MCF 10A (cell line): ENCODE measurements at regions of chr1 and their contacts with region 1.

Region 1: GRCh38 chr1:154849645-154850131 is 20.4 kb downstream of the KCNN3 start:
- DNase-seq: no peak
- H3K4me3 Mint-ChIP-seq: no peak overlapping the region
- H3K27ac Mint-ChIP-seq: no peak overlapping the region
- H3K4me1 Mint-ChIP-seq: no peaks in the 10 kb centered on the region
- H3K27me3 Mint-ChIP-seq: peaks cover 39% of the 10 kb centered on the region
- CTCF ChIP-seq: no peak

Region 2: GRCh38 chr1:154863315-154864174 is 13.9 kb after region 1 on chr1:
- CTCF ChIA-PET with region 1: interaction called, 12 read pairs
- POLR2A ChIA-PET with region 1: interaction called, 4 read pairs
- intact Hi-C with region 1: no loop called
- DNase-seq: peak; percentile 75
- H3K4me3 Mint-ChIP-seq: no peak overlapping the region
- H3K27ac Mint-ChIP-seq: no peak overlapping the region
- H3K4me1 Mint-ChIP-seq: peaks cover 17% of the 10 kb centered on the region
- H3K27me3 Mint-ChIP-seq: peaks cover 51% of the 10 kb centered on the region
- CTCF ChIP-seq: peak; percentile 73